BJ (cell line): ENCODE measurements at regions of chr2 and their contacts with region 1.

Region 1: GRCh38 chr2:170873035-170873692 is 55.9 kb upstream of the GORASP2 start:
- DNase-seq: no peak
- H3K4me3 ChIP-seq: peak overlapping the region; percentile 17; the same call in 1 of the 2 replicates
- H3K27me3 ChIP-seq: no peaks in the 10 kb centered on the region
- CTCF ChIP-seq: peak; percentile 95

Region 2: GRCh38 chr2:170851635-170852034 is 21.5 kb before region 1 on chr2:
- CTCF ChIA-PET with region 1: interaction called, 15 read pairs
- POLR2A ChIA-PET with region 1: no interaction called
- DNase-seq: no peak
- H3K4me3 ChIP-seq: no peak overlapping the region
- H3K27me3 ChIP-seq: no peaks in the 10 kb centered on the region
- CTCF ChIP-seq: no peak

Region 3: DNA sequence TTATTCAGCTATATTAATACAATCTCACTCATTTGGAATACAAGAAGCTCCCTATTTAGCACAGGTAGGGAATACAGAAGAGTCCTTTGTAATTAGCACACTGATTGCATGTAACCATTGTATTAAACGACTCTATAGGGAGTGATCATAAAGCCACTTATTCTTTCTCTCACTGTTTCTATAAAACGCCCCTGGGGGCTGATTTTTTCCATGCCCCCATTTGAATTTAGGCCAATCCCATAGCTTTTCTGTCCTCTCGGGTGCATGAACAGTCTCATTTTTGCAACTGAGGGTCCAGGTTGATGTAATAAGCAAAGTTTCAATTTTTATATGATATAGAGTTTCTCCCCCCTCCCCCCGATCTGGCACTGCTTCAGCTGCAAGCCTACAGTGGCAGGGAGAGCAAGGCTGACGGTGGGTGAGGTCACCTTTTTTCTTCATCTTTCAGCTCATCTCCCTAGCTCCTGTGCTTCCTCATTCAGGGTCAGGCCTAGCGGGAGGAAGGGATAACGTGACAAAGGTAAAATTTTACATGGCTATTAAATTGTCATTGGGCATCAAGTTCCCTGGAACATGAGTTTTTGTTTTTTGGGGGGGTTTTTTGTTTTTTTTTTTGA is 10.8 kb before region 1 on chr2:
- CTCF ChIA-PET with region 1: interaction called, 17 read pairs
- POLR2A ChIA-PET with region 1: no interaction called
- DNase-seq: no peak
- H3K4me3 ChIP-seq: no peak overlapping the region
- H3K27me3 ChIP-seq: no peaks in the 10 kb centered on the region
- CTCF ChIP-seq: no peak

Region 4: DNA sequence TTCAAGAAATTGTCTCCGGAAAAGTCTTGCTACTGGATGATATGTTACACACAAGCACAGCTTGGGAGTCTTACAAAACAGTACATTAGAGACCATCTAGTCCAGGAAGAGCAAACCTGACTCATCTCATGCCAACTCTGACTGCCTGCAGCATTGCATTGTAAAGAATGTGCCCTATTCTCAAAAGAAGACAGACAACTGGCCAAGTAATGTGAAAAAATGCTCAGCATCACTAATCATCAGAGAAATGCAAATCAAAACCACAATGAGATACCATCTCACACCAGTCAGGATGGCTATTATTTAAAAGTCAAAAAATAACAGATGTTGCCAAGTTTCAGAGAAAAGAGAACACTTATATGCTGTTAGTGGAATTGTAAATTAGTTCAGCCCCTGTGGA is 13.2 kb after region 1 on chr2:
- CTCF ChIA-PET with region 1: interaction called, 40 read pairs
- POLR2A ChIA-PET with region 1: interaction called, 4 read pairs
- DNase-seq: peak; percentile 34
- H3K4me3 ChIP-seq: no peak overlapping the region
- H3K27me3 ChIP-seq: peaks cover 3% of the 10 kb centered on the region
- CTCF ChIP-seq: no peak